Left cardiac atrium (tissue), 4 donors: ENCODE measurements at regions of chr9 and their contacts with region 1.

Region 1: GRCh38 chr9:127122176-127123063 is at the start of gene ANGPTL2:
- DNase-seq: peak; percentile 94
- ATAC-seq: peak; percentile 92 to 96
- total RNA-seq, gene ANGPTL2: 51.8 to 63.1 TPM

Region 2: DNA sequence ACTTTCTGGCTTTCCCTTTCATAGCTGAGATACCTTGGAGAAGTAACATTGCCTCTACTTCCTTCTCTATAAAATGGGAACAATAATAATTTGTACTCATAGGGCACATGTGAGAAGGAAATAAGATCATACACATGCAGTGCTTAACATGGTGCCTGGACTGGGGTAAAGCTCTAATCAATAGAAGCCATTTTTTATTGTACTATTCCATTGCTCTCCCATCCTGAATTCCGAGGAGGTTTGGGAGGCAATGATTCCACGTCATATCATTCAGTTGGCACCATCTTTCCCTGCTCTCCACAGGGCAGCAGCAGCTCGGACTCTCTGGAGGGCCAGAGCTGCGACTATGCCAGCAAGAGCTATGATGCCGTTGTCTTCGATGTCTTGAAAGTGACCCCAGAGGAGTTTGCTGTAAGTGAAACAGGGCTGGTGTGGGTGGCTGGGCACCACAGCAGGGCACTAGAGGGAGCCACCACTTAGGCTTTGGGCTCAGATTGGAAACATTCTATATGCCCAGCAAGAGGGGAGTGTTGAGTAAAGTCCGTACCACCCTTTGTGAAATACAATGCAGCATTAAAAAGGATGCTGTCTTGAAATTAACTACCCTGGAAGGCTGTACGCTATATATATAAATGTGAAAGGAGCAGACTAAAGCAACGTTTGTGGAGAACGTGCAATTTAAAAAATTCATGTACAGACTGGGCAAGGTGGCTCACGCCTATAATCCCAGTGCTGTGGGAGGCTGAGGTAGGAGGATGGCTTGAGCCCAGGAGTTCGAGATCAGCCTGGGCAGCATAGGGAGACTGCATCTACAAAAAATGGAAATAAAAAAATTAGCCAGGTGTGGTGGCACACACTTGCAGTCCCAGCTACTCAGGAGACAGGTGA is 156.6 kb before region 1 on chr9:
- intact Hi-C with region 1: loop called in 1 of 2 experiments (anchors 10 kb)
- DNase-seq: peak; percentile 41
- ATAC-seq: peak; percentile 82 to 89

Region 3: DNA sequence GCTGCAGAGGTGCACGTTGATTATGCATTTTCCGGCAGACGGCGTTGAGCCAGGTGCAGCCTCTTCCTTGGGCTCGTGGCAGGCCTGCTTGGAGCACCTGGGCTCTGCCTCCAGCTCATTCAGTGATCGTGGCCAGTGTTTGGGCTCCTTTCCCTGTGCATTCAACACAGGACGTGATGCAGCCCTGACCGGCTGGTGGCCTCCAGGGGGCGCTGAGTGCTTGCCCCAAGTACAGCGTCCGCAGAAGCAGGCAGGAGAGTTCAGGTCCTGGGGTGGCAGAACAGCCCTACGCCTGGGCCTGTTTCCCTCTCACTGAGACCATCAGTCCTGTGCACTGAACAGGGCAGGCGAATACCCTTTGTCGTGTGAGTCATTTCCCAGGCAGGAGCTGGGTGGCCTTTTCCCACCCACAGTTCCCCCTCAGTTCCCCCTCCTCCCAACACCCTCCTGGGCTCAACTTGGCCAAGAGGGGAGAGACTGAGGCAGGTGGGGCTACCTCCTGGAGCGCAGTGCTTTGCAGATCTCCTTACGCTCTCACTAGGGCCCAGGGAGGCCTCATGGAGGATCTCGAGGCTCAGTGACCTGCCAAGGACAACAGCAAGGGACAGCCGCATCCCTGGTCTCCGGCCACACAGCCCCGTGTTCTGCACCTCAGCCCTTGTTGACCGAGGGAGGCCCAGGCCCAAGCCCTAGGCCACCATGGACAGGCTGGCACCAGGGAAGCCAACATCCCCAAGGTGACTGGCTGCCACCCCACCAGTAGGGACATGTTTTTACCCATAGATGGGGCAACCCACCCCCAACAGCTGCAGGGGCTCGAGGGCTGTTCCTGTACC is 381.7 kb after region 1 on chr9:
- intact Hi-C with region 1: no loop called
- DNase-seq: peak; percentile 88
- ATAC-seq: peak; percentile 74 to 89